ENCODE measurements at regions of chr18 and their contacts with region 1.

Region 1: DNA sequence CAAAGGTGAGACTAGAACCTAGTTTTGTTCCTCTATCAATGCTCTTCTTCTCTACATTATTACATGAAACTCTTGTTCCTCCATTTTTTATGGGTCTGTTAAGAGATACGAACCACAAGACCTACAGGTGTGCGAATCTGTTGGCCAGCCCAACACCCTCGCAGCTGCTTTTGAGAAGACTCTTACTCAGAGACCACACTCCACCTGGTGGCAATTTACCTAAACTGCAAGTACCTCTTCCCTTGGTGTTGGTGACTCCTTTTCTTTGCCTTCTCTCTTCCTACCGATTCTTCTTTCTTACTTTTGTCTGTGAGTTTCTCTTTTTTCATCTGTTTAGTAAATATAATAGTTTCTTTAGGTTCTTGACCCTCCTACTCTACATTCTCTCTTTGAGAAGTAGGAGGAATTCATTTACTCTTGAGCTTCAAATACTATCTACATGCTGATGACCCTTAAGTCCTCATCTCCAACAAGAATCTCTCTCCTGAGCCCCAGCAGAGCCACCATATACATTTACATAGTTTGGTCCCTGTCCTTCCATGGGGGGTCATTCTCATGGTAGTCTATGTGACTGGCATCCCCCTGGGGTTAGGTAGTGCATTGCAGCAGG is 81.8 kb upstream of the GAREM1 start:
- DNase-seq: peak; percentile 70
- ATAC-seq: peak; percentile 74
- H3K4me3 Mint-ChIP-seq: no peak overlapping the region
- H3K27ac Mint-ChIP-seq: no peak overlapping the region
- H3K4me1 Mint-ChIP-seq: no peaks in the 10 kb centered on the region
- H3K27me3 Mint-ChIP-seq: peaks cover 4% of the 10 kb centered on the region

Region 2: GRCh38 chr18:32158108-32158624 is 394.4 kb before region 1 on chr18:
- CTCF ChIA-PET with region 1: interaction called, 68 read pairs
- POLR2A ChIA-PET with region 1: no interaction called
- DNase-seq: peak; percentile 82
- ATAC-seq: peak; percentile 97
- H3K4me3 Mint-ChIP-seq: peak overlapping the region; percentile 42
- H3K27ac Mint-ChIP-seq: peak overlapping the region; percentile 26
- H3K4me1 Mint-ChIP-seq: peaks cover 11% of the 10 kb centered on the region
- H3K27me3 Mint-ChIP-seq: peaks cover 5% of the 10 kb centered on the region

Region 3: GRCh38 chr18:32271672-32272208 is 280.8 kb before region 1 on chr18:
- CTCF ChIA-PET with region 1: interaction called, 18 read pairs
- POLR2A ChIA-PET with region 1: no interaction called
- DNase-seq: peak; percentile 24
- ATAC-seq: no peak
- H3K4me3 Mint-ChIP-seq: no peak overlapping the region
- H3K27ac Mint-ChIP-seq: no peak overlapping the region
- H3K4me1 Mint-ChIP-seq: no peaks in the 10 kb centered on the region
- H3K27me3 Mint-ChIP-seq: peaks cover 8% of the 10 kb centered on the region

Region 4: GRCh38 chr18:32530947-32531651 is 21.4 kb before region 1 on chr18:
- CTCF ChIA-PET with region 1: no interaction called
- POLR2A ChIA-PET with region 1: no interaction called
- DNase-seq: no peak
- ATAC-seq: peak; percentile 79
- H3K4me3 Mint-ChIP-seq: no peak overlapping the region
- H3K27ac Mint-ChIP-seq: no peak overlapping the region
- H3K4me1 Mint-ChIP-seq: peaks cover 12% of the 10 kb centered on the region
- H3K27me3 Mint-ChIP-seq: peaks cover 2% of the 10 kb centered on the region

Measured in activated CD8-positive, alpha-beta T cell treated with anti-CD3 and anti-CD28 coated beads, Interleukin-2, amount 10 ng/mL, durations not matched to agents 7 days and 5 days (primary cell).